ENCODE measurements at regions of chr6 and their contacts with region 1.

Region 1: GRCh38 chr6:107114213-107114905 is 956 bp downstream of the BEND3 start:
- DNase-seq: peak; percentile 61
- ATAC-seq: peak; percentile 77
- H3K4me3 ChIP-seq: peak overlapping the region; percentile 61 to 80 (median 79)
- H3K27ac ChIP-seq: peak overlapping the region; percentile 74
- H3K4me1 ChIP-seq: peaks cover 32% of the 10 kb centered on the region
- H3K27me3 ChIP-seq: no peaks in the 10 kb centered on the region; a peak in 1 of 5 replicates
- CTCF ChIP-seq: peak; percentile 76
- EP300 ChIP-seq: no peak
- POLR2A ChIP-seq: peak; percentile 49 to 57
- RAD21 ChIP-seq: peak; percentile 89

Region 2: GRCh38 chr6:107033126-107033525 is 81.2 kb before region 1 on chr6:
- CTCF ChIA-PET with region 1: interaction called, 6 read pairs
- POLR2A ChIA-PET with region 1: interaction called, 9 read pairs
- in situ Hi-C with region 1: no loop called
- intact Hi-C with region 1: loop called (anchors 2 kb)
- DNase-seq: no peak
- ATAC-seq: no peak
- H3K4me3 ChIP-seq: no peak overlapping the region
- H3K27ac ChIP-seq: peak overlapping the region; percentile 1
- H3K4me1 ChIP-seq: peaks cover 34% of the 10 kb centered on the region
- H3K27me3 ChIP-seq: no peaks in the 10 kb centered on the region
- CTCF ChIP-seq: no peak
- EP300 ChIP-seq: no peak
- POLR2A ChIP-seq: no peak
- RAD21 ChIP-seq: no peak

Region 3: GRCh38 chr6:107102414-107102990 is 11.9 kb before region 1 on chr6:
- CTCF ChIA-PET with region 1: no interaction called
- POLR2A ChIA-PET with region 1: no interaction called
- in situ Hi-C with region 1: no loop called
- intact Hi-C with region 1: no loop called
- DNase-seq: no peak
- ATAC-seq: no peak
- H3K4me3 ChIP-seq: no peak overlapping the region
- H3K27ac ChIP-seq: no peak overlapping the region
- H3K4me1 ChIP-seq: peaks cover 14% of the 10 kb centered on the region
- H3K27me3 ChIP-seq: no peaks in the 10 kb centered on the region
- CTCF ChIP-seq: no peak
- EP300 ChIP-seq: no peak
- POLR2A ChIP-seq: no peak
- RAD21 ChIP-seq: no peak

Region 4: GRCh38 chr6:107132330-107132954 is 18.1 kb after region 1 on chr6:
- CTCF ChIA-PET with region 1: no interaction called
- POLR2A ChIA-PET with region 1: interaction called, 10 read pairs
- in situ Hi-C with region 1: no loop called
- intact Hi-C with region 1: loop called (anchors 1 kb)
- DNase-seq: peak; percentile 46
- ATAC-seq: peak; percentile 56
- H3K4me3 ChIP-seq: no peak overlapping the region
- H3K27ac ChIP-seq: no peak overlapping the region
- H3K4me1 ChIP-seq: peaks cover 42% of the 10 kb centered on the region
- H3K27me3 ChIP-seq: no peaks in the 10 kb centered on the region
- CTCF ChIP-seq: peak; percentile 48
- EP300 ChIP-seq: no peak
- POLR2A ChIP-seq: no peak
- RAD21 ChIP-seq: peak; percentile 29; the same call in 1 of the 2 replicates